ENCODE measurements at regions of chr21 and their contacts with region 1.

Region 1: GRCh38 chr21:32770871-32771523 is 558 bp downstream of the PAXBP1 start:
- DNase-seq: peak in 1 of 9 donors; percentile 42
- ATAC-seq: peak; percentile 36
- H3K4me3 ChIP-seq: peak overlapping the region; percentile 77
- H3K4me3 Mint-ChIP-seq: peak overlapping the region; percentile 90 to 97 (median 94)
- H3K27ac ChIP-seq: peak overlapping the region; percentile 79
- H3K27ac Mint-ChIP-seq: peak overlapping the region; percentile 90 to 99 (median 95)
- H3K4me1 ChIP-seq: peaks cover 29 to 31% of the 10 kb centered on the region in 2 donors
- H3K4me1 Mint-ChIP-seq: peaks cover 43 to 75% (median 66%) of the 10 kb centered on the region in 7 donors
- H3K27me3 ChIP-seq: no peaks in the 10 kb centered on the region
- H3K27me3 Mint-ChIP-seq: peaks cover 0 to 5% (median 0%) of the 10 kb centered on the region in 5 donors

Region 2: GRCh38 chr21:32359711-32360260 is 411.2 kb before region 1 on chr21:
- CTCF ChIA-PET with region 1: no interaction called
- POLR2A ChIA-PET with region 1: no interaction called
- intact Hi-C with region 1: no loop called
- DNase-seq: no peak
- ATAC-seq: no peak
- H3K4me3 ChIP-seq: no peak overlapping the region
- H3K4me3 Mint-ChIP-seq: no peak overlapping the region
- H3K27ac ChIP-seq: no peak overlapping the region
- H3K27ac Mint-ChIP-seq: peak overlapping the region in 1 of 9 donors; percentile 25
- H3K4me1 ChIP-seq: no peaks in the 10 kb centered on the region
- H3K4me1 Mint-ChIP-seq: peaks cover 0 to 11% (median 0%) of the 10 kb centered on the region in 7 donors
- H3K27me3 ChIP-seq: no peaks in the 10 kb centered on the region
- H3K27me3 Mint-ChIP-seq: no peaks in the 10 kb centered on the region

Region 3: DNA sequence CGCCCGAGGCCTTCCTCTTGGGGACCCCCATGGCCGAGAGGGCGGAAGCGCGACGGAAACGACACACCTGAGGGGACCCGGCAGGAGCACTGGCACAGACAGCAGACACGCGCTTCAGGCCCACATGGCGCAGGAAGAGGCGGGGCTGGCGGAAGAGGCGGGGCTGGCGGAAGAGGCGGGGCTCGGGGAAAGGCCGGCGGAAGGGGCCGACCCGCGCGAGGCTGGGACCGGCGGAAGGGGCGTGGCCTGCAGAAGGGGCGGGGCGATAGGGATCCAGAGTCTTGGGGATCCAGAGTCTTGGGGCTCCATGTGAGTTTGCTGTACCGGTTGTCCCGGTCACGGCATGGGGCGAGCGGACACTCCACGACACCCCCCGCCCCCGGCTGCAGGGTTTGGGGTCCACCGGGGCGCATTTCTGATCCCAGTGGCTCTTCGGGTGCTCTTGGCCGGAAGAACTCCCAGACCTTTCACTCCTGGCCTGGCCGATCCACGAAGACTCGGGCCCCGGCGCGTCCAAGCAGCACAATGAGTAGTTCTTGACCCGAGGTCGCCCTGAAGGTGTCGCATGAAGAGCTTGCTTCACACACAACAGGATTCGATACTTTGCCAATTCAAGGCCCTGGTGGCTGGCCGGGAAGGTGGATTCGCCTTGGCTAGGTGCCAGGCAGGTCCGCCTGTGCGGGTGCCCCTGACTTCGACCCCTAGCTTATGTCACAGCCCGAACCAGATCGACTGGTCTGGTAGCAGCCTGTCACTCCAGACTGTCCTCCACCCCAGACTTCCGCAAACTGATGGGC is 377.9 kb before region 1 on chr21 and contains the start of gene URB1:
- CTCF ChIA-PET with region 1: interaction called, 5 read pairs
- POLR2A ChIA-PET with region 1: no interaction called
- intact Hi-C with region 1: loop called (anchors 1 kb)
- DNase-seq: peak; percentile 88 to 99 (median 94)
- ATAC-seq: peak; percentile 99
- H3K4me3 ChIP-seq: peak within 1 kb of the TSS; percentile 85
- H3K4me3 Mint-ChIP-seq: peak within 1 kb of the TSS; percentile 81 to 92 (median 86)
- H3K27ac ChIP-seq: peak within 1 kb of the TSS; percentile 70
- H3K27ac Mint-ChIP-seq: peak within 1 kb of the TSS; percentile 46 to 90 (median 71)
- H3K4me1 ChIP-seq: peaks cover 8 to 12% of the 10 kb centered on the region in 2 donors
- H3K4me1 Mint-ChIP-seq: peaks cover 34 to 52% (median 43%) of the 10 kb centered on the region in 7 donors
- H3K27me3 ChIP-seq: no peaks in the 10 kb centered on the region
- H3K27me3 Mint-ChIP-seq: peaks cover 2 to 20% (median 3%) of the 10 kb centered on the region in 5 donors
- total RNA-seq, gene URB1: 14.5 to 20.6 (median 17.9) TPM

Region 4: GRCh38 chr21:32727687-32728455 is 43.1 kb before region 1 on chr21 and contains the start of gene SYNJ1:
- CTCF ChIA-PET with region 1: interaction called, 14 read pairs
- POLR2A ChIA-PET with region 1: interaction called, 42 read pairs
- intact Hi-C with region 1: loop called (anchors 1 kb)
- DNase-seq: peak; percentile 90 to 97 (median 93)
- ATAC-seq: peak; percentile 95
- H3K4me3 ChIP-seq: peak within 1 kb of the TSS; percentile 78
- H3K4me3 Mint-ChIP-seq: peak within 1 kb of the TSS; percentile 92 to 100 (median 98)
- H3K27ac ChIP-seq: peak within 1 kb of the TSS; percentile 82
- H3K27ac Mint-ChIP-seq: peak within 1 kb of the TSS; percentile 90 to 99 (median 97)
- H3K4me1 ChIP-seq: peaks cover 7 to 42% of the 10 kb centered on the region in 2 donors
- H3K4me1 Mint-ChIP-seq: peaks cover 29 to 78% (median 69%) of the 10 kb centered on the region in 7 donors
- H3K27me3 ChIP-seq: no peaks in the 10 kb centered on the region
- H3K27me3 Mint-ChIP-seq: no peaks in the 10 kb centered on the region
- total RNA-seq, gene SYNJ1: 21.5 to 28.5 (median 22.2) TPM

Region 5: DNA sequence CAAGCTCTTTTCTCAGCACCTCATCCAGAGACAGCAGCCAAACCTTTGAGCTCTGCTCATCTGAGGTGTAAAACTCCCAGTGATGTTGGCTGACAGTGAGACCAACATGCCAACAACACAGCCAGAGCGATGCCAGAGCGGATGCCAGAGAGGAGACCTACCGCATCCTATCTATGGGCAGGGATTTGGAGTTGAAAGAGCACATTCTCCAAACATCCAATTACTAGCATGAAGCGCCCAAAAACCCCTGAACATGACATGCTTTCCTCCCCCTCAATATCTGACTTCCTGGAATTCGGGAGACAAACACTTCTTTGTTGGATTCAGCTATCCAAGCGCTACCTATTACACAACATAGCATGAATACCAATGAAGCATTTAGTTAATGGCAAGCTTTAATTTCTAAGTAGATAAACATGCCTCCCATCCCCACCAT is 23.7 kb after region 1 on chr21:
- CTCF ChIA-PET with region 1: no interaction called
- POLR2A ChIA-PET with region 1: no interaction called
- intact Hi-C with region 1: no loop called
- DNase-seq: no peak
- ATAC-seq: no peak
- H3K4me3 ChIP-seq: no peak overlapping the region
- H3K4me3 Mint-ChIP-seq: no peak overlapping the region
- H3K27ac ChIP-seq: no peak overlapping the region
- H3K27ac Mint-ChIP-seq: no peak overlapping the region
- H3K4me1 ChIP-seq: no peaks in the 10 kb centered on the region
- H3K4me1 Mint-ChIP-seq: peaks cover 0 to 4% (median 0%) of the 10 kb centered on the region in 7 donors
- H3K27me3 ChIP-seq: no peaks in the 10 kb centered on the region
- H3K27me3 Mint-ChIP-seq: no peaks in the 10 kb centered on the region

Region 6: GRCh38 chr21:32826329-32827167 is 55.6 kb after region 1 on chr21:
- CTCF ChIA-PET with region 1: no interaction called
- POLR2A ChIA-PET with region 1: no interaction called
- intact Hi-C with region 1: loop called in 1 of 2 experiments (anchors 2 kb)
- DNase-seq: peak in 8 of 9 donors; percentile 10 to 55 (median 34)
- ATAC-seq: peak; percentile 80
- H3K4me3 ChIP-seq: no peak overlapping the region
- H3K4me3 Mint-ChIP-seq: no peak overlapping the region
- H3K27ac ChIP-seq: no peak overlapping the region
- H3K27ac Mint-ChIP-seq: no peak overlapping the region
- H3K4me1 ChIP-seq: no peaks in the 10 kb centered on the region
- H3K4me1 Mint-ChIP-seq: peaks cover 0 to 7% (median 0%) of the 10 kb centered on the region in 7 donors
- H3K27me3 ChIP-seq: no peaks in the 10 kb centered on the region
- H3K27me3 Mint-ChIP-seq: peaks cover 0 to 19% (median 4%) of the 10 kb centered on the region in 5 donors

Region 7: DNA sequence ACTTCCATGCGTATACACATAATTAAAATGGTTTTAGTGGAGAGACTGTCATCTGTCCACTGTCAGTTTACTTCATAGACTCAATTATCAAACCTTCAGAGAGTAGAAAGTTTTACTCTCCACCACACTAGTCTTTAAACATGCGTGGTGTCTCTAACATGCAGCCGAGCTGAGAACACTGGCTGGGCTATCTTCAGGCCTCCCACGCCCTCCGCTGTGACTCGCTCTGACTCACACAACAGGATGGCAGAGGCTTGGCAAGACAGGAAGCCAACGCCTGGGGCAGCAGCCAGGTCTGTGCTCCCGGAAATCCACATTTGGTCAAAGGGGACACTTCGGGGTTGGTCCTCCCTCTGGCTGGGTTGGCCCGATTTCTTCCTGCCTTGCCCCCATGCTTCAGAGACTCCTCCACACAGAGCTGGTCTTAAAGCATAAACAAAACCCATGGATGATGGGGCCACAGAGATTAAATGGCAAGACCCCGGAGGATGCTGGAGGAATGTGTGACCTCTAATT is 609.5 kb after region 1 on chr21:
- CTCF ChIA-PET with region 1: interaction called, 4 read pairs
- POLR2A ChIA-PET with region 1: no interaction called
- intact Hi-C with region 1: loop called in 1 of 2 experiments (anchors 1 kb)
- DNase-seq: peak; percentile 46 to 81 (median 63)
- ATAC-seq: peak; percentile 78
- H3K4me3 ChIP-seq: peak overlapping the region; percentile 0
- H3K4me3 Mint-ChIP-seq: peak overlapping the region; percentile 34 to 98 (median 66)
- H3K27ac ChIP-seq: peak overlapping the region; percentile 53
- H3K27ac Mint-ChIP-seq: peak overlapping the region; percentile 69 to 91 (median 87)
- H3K4me1 ChIP-seq: peaks cover 45 to 60% of the 10 kb centered on the region in 2 donors
- H3K4me1 Mint-ChIP-seq: peaks cover 48 to 70% (median 63%) of the 10 kb centered on the region in 7 donors
- H3K27me3 ChIP-seq: peaks cover 0 to 6% of the 10 kb centered on the region in 2 donors
- H3K27me3 Mint-ChIP-seq: peaks cover 0 to 40% (median 0%) of the 10 kb centered on the region in 5 donors

Region 8: DNA sequence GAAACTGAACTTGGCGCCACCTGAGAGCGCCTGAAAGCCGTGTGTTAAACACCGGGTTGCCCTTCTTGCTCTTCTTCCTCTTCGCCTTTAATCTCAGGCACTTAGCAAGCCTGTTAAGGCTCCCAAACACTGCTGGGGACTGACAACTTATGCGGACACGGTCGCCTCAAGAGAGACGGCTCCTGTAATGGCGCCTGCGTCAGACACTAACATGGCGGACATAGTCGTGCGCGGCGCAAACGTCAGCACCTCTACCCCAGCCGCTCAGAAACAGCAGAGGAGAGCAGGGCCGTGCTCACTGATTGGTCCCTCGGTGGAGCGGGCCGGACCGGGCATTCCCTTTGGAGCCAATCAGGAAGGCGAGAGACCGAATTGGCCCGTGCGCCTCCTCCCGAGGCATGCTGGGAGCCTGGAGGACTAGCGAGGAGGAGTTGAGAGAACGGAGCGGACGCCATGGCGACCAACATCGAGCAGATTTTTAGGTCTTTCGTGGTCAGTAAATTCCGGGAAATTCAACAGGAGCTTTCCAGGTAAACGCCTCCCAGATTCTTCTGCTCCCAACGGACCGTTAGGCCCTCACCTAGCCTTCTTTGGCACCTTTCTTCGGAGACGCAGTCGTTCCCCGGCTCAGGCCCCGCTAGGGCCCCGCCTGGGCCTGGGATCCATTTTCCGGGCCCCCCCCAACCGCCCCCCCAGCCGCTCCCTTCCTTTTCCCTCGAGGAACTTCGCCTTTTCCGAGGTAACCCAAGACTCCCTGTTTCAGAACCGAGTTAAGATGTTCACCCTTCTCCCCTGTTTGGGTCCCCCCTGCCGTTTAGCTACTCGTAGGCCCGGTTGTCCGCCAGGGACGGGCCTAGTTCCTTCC is 771.9 kb after region 1 on chr21 and contains the start of gene SON:
- CTCF ChIA-PET with region 1: no interaction called
- POLR2A ChIA-PET with region 1: interaction called, 4 read pairs
- intact Hi-C with region 1: loop called (anchors 1 kb)
- DNase-seq: peak; percentile 87 to 99 (median 98)
- ATAC-seq: peak; percentile 94
- H3K4me3 ChIP-seq: peak within 1 kb of the TSS; percentile 95
- H3K4me3 Mint-ChIP-seq: peak within 1 kb of the TSS; percentile 90 to 100 (median 97)
- H3K27ac ChIP-seq: peak within 1 kb of the TSS; percentile 99
- H3K27ac Mint-ChIP-seq: peak within 1 kb of the TSS; percentile 99 to 100 (median 99)
- H3K4me1 ChIP-seq: peaks cover 20 to 30% of the 10 kb centered on the region in 2 donors
- H3K4me1 Mint-ChIP-seq: peaks cover 29 to 54% (median 45%) of the 10 kb centered on the region in 7 donors
- H3K27me3 ChIP-seq: no peaks in the 10 kb centered on the region
- H3K27me3 Mint-ChIP-seq: peaks cover 0 to 5% (median 0%) of the 10 kb centered on the region in 5 donors
- total RNA-seq, gene SON: 337 to 497 (median 431) TPM

Measured in naive thymus-derived CD4-positive, alpha-beta T cell (primary cell).